Lower leg skin (tissue), 4 donors: ENCODE measurements at regions of chr4 and their contacts with region 1.

Region 1: DNA sequence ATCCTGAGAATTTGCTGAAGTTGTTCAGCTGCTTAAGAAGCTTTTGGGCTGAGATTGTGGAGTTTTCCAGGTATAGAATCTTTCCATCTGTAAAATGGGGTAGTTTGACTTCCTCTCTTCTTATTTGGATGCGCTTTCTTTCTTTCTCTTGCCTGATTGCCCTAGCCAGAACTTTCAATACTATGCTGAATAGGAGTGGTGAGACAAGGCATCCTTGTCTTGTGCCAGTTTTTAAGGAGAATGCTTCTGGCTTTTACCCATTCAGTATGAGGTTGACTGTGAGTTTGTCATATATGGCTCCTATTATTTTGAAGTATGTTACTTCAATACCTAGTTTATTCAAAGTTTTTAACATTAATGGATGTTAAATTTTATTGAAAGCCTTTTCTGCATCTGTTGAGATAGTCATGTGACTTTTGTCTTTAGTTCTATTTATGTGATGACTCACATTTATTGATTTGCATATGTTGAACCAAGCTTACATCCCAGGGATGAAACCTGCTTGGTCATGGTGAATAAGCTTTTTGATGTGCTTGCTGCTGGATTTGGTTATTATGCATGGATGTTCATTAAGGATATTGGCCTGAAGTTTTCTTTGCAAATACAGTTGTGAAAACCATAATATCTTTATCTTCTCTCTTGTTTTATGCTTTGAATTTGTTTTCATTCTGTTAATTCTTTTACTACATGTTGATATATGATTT is 573.8 kb upstream of the NDST4 start:
- DNase-seq: no peak
- H3K4me3 ChIP-seq: no peak overlapping the region
- CTCF ChIP-seq: no peak
- POLR2A ChIP-seq: no peak

Region 2: DNA sequence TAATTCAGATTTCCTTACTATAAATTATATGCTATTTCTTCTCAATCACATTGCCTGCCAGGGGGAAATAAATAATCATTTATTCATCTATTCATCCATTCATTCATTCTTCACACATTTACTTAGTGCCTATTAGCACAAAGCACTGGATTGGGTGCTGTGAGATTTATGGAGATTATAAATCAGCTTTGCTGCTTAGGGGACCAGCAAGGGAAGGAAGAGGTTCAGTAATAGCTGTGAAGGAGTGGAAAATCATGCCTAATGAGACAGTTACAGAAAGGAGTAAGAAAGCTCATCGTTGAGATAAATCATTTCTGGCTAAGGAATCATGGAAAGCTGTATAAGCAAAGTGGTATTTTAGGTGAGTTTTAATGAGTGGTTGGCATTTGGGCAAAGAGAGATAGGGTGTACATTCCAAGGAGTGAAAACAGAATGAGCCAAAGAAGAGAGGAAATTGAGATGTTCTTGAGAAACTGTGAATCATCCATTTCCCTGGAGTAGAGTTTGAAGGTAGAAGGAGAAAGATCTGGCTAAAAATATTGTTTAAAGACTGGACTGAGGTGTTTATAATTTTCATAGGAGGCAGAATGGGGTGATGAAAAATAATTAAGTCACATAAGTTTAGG is 1717.4 kb before region 1 on chr4:
- intact Hi-C with region 1: loop called (anchors 5 kb)
- DNase-seq: no peak
- H3K4me3 ChIP-seq: no peak overlapping the region
- CTCF ChIP-seq: no peak
- POLR2A ChIP-seq: no peak

Region 3: GRCh38 chr4:115629270-115629669 is 57.9 kb before region 1 on chr4:
- intact Hi-C with region 1: no loop called
- DNase-seq: no peak
- H3K4me3 ChIP-seq: no peak overlapping the region
- CTCF ChIP-seq: no peak
- POLR2A ChIP-seq: no peak